Left colon (tissue), 2 donors: ENCODE measurements at regions of chr22 and their contacts with region 1.

Region 1: GRCh38 chr22:32265882-32266767 is 11.0 kb upstream of the SLC5A4 start:
- DNase-seq: peak; percentile 47 to 72
- ATAC-seq: peak; percentile 85

Region 2: DNA sequence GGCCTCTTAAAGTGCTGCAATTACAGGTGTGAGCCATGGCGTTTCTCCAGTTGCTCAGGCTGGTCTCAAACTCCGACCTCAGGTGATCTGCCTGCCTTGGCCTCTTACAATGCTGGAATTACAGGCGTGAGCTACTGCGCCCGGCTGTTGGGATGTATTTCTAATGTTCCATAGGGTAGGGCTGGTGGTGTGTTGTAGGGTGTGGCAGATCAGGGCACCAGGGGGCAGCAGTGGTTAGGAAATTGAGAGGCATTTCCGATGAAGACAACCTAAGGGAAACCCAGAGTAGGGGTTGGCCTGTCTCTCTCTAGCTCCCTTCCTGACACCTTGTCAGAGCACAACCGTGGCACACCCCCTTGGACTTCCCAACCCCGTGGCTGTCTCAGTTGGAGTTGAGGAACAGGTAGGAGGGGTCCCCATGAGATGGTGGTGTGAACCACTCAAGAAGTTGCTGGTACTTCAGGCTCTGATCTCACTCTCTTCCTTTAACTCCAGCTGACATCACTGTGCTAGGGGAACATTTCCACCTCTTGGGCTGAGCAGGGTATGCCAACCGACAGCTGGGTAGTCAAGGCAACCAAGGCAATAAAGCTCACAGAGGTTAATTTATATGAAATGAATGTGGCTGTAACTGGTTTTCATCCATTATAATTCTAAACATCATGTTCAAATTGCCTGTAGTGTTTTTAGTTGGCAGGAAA is 288.8 kb before region 1 on chr22:
- intact Hi-C with region 1: loop called in 1 of 2 experiments (anchors 5 kb)
- DNase-seq: peak; percentile 78 to 94
- ATAC-seq: peak; percentile 64

Region 3: GRCh38 chr22:32222991-32223390 is 43.1 kb before region 1 on chr22:
- intact Hi-C with region 1: no loop called
- DNase-seq: no peak
- ATAC-seq: no peak

Region 4: DNA sequence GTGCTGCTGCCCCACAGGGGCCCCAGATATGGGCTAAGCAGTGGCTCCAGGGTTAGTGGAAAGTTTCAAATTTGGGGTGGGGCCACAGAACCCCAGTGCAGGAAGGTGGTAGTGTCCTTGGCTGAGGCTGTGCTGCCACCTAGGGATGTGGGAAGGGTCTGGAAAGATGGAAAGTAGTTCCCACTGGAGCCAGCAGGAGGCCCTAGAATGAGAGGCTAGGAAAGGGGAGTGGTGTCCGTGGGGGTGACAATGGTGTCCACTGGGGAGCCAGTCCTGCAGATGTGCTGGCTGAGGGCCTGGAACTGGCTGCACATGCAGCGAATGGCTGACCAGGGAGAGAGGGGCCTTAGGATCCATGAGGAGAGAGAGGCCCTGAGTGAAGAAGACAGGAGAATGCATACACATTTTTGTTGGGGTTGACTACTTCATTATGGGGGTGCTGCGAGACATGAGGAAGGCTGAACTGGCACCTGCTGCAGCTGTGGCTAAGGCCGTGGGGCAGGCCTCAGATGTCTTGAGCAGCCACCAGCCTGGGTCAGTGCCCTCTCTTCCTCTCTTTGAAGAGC is 112.7 kb after region 1 on chr22:
- intact Hi-C with region 1: no loop called
- DNase-seq: peak in 1 of 2 donors; percentile 29
- ATAC-seq: peak; percentile 79